Heart right ventricle (tissue), 16 donors: ENCODE measurements at regions of chr11 and their contacts with region 1.

Region 1: DNA sequence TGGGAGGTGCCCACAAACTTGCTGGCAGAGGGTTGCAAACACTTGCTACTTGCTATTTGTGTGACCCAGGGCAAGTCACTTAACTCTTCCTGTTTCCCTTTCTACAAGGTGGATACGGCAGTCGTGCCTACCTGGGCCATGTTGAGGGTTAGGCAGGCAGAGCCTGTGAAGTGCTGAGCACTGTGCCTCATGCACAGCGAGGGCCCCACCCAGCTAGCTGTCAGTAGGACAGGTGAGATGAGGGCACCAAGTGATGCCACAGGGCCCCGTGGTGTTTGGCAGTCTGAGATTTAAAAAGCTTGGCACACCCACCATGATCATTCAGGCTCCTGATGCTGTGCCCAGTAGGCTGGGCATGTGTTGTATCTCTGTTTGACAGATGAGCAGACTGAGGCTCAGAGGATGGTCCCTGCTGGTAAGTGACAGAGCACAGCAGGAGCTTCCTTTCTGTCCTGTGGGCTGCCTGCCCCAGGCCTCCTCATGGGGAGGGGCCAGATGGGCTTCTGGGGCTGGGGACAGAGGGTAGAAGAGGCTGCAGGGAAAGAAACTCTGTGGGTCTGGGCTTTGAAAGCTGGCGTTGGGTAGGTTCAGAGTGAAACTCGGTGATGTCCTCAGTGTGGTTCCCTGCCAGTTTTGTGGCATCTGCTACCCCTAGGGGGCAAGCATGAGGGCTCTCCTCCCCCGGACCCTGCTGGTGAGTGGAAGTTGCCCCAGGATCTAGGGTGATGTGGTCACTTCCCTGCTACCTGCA is 59.3 kb downstream of the TSPAN18 start:
- DNase-seq: no peak
- ATAC-seq: peak in 5 of 8 donors; percentile 12 to 37 (median 25)
- H3K4me3 ChIP-seq: no peak overlapping the region
- H3K27ac ChIP-seq: peak overlapping the region in 5 of 10 donors; percentile 7 to 75 (median 36)
- H3K4me1 ChIP-seq: peaks cover 16 to 85% (median 56%) of the 10 kb centered on the region in 9 donors
- H3K27me3 ChIP-seq: no peaks in the 10 kb centered on the region
- CTCF ChIP-seq: peak in 5 of 9 donors; percentile 6 to 35 (median 27)

Region 2: DNA sequence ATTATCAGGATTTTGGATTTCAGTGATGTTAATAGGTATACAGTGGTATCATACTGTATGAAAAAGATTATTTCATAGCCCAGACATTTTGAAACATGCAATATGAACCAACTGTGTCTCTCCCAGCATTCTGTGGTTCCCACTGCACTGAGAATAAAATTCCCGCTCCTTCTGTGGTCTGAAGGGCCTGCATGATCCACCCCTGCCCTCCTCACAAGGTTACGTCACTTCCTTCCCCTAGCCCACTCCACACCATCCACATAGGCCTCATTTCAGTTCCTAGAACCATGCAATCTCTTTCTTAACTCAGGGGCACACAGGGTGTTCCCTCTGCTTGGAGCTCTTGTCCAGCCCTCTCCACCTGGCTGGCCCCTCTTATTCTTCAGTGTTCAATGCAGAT is 43.8 kb after region 1 on chr11:
- intact Hi-C with region 1: loop called in 1 of 10 experiments (anchors 5 kb)
- DNase-seq: no peak
- ATAC-seq: no peak
- H3K4me3 ChIP-seq: no peak overlapping the region
- H3K27ac ChIP-seq: no peak overlapping the region
- H3K4me1 ChIP-seq: peaks cover 9 to 60% (median 34%) of the 10 kb centered on the region in 9 donors
- H3K27me3 ChIP-seq: no peaks in the 10 kb centered on the region
- CTCF ChIP-seq: no peak

Region 3: DNA sequence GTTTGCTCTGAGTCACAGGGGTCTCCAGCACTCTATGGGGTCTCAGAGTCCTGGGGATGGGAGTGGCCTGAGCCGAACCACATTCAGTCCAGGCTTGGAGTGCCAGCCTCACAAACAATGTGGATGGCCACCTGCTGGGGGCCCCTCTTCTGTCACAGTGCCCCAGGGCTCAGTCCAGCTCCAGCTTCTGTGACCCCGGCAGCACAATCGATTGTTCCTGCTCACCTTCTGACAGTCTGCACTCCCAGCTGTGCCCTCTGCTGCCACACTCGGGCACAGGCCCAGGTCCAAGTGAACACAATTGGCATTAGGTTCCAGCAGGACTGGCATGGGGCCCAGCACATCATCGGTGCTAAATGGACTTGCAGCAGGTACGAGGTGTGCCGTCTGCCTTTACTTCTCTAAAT is 79.8 kb after region 1 on chr11:
- intact Hi-C with region 1: loop called in 1 of 10 experiments (anchors 5 kb)
- DNase-seq: peak; percentile 66 to 75
- ATAC-seq: peak in 7 of 8 donors; percentile 48 to 60 (median 57)
- H3K4me3 ChIP-seq: no peak overlapping the region
- H3K27ac ChIP-seq: peak overlapping the region in 8 of 10 donors; percentile 19 to 78 (median 66)
- H3K4me1 ChIP-seq: peaks cover 10 to 64% (median 32%) of the 10 kb centered on the region in 9 donors
- H3K27me3 ChIP-seq: peaks cover 0 to 4% (median 0%) of the 10 kb centered on the region in 7 donors
- CTCF ChIP-seq: peak in 4 of 9 donors; percentile 28 to 51 (median 42)